ENCODE measurements at regions of chr11 and their contacts with region 1.

Region 1: DNA sequence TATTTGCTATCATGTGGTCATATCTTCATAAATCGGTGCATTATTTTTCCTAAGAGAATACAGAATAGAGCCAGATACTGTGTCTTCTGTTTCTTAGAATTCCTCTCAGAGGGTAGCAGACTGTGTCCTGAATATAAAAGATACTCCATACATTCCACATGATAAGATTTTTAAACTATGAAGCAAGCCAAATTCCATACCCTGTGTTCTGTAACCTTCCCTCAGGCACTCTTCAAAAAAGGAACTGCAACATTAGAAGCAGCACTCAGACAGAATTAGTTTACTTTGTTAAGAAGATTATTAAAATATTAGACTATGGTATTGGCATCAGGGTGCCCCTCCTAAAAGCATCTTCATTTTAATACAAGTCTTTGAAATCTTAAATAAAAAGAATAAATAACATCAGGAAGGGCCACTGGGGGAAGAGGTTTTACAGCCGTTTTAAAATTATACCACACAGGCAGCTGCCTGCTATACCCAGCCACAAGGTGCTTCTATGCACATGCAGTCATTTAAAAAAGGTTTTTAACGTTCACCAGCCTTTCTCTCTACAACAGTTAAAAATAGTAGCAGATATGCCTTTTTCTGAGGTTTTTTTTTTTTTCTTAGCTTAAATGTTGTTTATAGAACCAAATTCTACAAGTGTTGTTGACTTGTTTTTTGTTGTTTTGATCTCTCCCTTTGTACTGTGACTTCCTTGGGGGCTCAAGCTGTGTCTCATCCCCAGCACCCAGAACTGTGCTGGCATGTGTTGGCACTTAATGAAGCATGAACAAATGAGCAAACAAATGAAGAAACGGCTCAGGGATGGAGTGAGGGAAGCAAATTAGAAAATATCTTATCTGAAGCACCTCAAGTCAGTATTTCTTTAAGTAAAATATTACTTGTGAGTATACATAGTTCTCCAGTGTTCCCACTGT is 54.7 kb upstream of the CCDC89 start:
- DNase-seq: peak; percentile 22
- ATAC-seq: no peak; the same call in 1 of the 2 replicates
- H3K4me3 ChIP-seq: no peak overlapping the region
- H3K27ac ChIP-seq: 0 out of 2 replicates have a peak overlapping the region, but pooled peaks have one; percentile 92
- H3K4me1 ChIP-seq: peaks cover 59% of the 10 kb centered on the region
- H3K27me3 ChIP-seq: no peaks in the 10 kb centered on the region
- CTCF ChIP-seq: no peak

Region 2: GRCh38 chr11:85787809-85788805 is 47.4 kb after region 1 on chr11:
- CTCF ChIA-PET with region 1: no interaction called
- POLR2A ChIA-PET with region 1: no interaction called
- intact Hi-C with region 1: loop called (anchors 5 kb)
- DNase-seq: peak; percentile 93
- ATAC-seq: peak; percentile 98
- H3K4me3 ChIP-seq: peak overlapping the region; percentile 12; the same call in 1 of the 2 replicates
- H3K27ac ChIP-seq: peak overlapping the region; percentile 91
- H3K4me1 ChIP-seq: peaks cover 37% of the 10 kb centered on the region
- H3K27me3 ChIP-seq: no peaks in the 10 kb centered on the region
- CTCF ChIP-seq: no peak

Region 3: DNA sequence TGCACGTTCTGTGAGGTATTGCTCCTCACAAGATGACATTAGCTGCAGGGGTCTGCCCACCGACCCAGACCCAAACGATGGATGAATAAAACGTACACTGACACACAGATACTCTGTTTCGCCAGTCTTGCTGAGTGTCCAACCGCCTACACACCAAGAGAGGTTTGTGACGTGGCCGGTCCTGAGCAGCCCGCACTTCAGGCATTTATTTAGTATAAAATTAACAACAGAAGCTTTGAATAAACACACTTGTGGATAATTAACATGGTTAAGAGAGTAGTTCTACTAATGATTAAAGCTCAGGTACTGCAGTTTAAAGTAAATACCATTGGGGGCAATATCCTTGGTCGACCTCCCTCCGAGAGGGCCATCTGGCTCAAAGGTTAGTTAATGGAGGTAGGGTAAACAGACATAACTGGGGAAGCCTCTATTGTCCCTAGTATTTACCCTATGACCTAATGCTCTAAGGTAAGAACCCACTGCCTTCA is 190.2 kb after region 1 on chr11:
- CTCF ChIA-PET with region 1: no interaction called
- POLR2A ChIA-PET with region 1: no interaction called
- intact Hi-C with region 1: no loop called
- DNase-seq: no peak
- ATAC-seq: no peak
- H3K4me3 ChIP-seq: no peak overlapping the region
- H3K27ac ChIP-seq: no peak overlapping the region
- H3K4me1 ChIP-seq: no peaks in the 10 kb centered on the region
- H3K27me3 ChIP-seq: no peaks in the 10 kb centered on the region
- CTCF ChIP-seq: no peak